ENCODE measurements at regions of chr3 and their contacts with region 1.

Region 1: GRCh38 chr3:149702691-149703441 is 45.0 kb upstream of the WWTR1 start:
- DNase-seq: no peak
- H3K4me3 Mint-ChIP-seq: no peak overlapping the region
- H3K27ac Mint-ChIP-seq: peak overlapping the region; percentile 64
- H3K4me1 Mint-ChIP-seq: peaks cover 33% of the 10 kb centered on the region
- H3K27me3 Mint-ChIP-seq: no peaks in the 10 kb centered on the region

Region 2: GRCh38 chr3:149575961-149576564 is 126.8 kb before region 1 on chr3:
- intact Hi-C with region 1: loop called (anchors 1 kb)
- DNase-seq: no peak
- H3K4me3 Mint-ChIP-seq: no peak overlapping the region
- H3K27ac Mint-ChIP-seq: peak overlapping the region; percentile 42
- H3K4me1 Mint-ChIP-seq: peaks cover 57% of the 10 kb centered on the region
- H3K27me3 Mint-ChIP-seq: no peaks in the 10 kb centered on the region

Region 3: DNA sequence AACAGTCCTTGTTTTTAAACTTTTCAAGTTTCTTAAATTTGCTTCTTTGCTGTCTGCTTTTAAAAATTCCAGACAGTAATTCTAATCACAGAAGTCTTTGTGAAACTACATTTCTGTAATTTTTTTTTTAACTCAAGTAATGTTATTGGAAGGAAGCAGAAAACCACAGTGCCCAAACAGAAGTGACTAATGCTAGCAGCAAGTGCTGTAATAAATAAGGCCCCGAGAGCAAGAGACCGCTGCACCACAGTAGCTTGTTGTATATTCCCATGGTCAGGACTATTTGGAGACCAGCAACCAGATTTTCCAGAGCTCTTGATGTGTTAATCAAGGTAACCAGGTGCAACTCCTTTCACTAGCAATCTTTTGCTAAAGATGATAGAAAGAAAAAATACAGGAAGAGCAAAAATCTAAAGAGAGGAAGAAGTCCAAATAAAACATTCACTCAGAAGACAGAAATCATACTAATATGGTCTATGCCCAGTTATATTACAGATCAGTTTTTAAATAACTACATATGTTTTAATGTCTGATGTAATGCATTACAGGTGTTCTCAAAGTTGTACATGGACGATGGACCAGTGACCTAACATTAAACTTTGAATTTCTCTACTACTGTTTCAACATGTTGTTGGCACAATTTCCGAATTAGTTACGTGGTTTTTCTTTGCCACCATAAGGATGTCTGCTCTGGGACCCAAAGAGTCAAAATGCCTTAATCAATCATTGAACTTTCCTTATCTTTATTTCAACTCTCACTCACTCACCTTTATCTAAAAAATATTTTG is 81.5 kb before region 1 on chr3:
- intact Hi-C with region 1: loop called (anchors 1 kb)
- DNase-seq: no peak
- H3K4me3 Mint-ChIP-seq: no peak overlapping the region
- H3K27ac Mint-ChIP-seq: peak overlapping the region; percentile 2
- H3K4me1 Mint-ChIP-seq: peaks cover 31% of the 10 kb centered on the region
- H3K27me3 Mint-ChIP-seq: peaks cover 10% of the 10 kb centered on the region

Region 4: DNA sequence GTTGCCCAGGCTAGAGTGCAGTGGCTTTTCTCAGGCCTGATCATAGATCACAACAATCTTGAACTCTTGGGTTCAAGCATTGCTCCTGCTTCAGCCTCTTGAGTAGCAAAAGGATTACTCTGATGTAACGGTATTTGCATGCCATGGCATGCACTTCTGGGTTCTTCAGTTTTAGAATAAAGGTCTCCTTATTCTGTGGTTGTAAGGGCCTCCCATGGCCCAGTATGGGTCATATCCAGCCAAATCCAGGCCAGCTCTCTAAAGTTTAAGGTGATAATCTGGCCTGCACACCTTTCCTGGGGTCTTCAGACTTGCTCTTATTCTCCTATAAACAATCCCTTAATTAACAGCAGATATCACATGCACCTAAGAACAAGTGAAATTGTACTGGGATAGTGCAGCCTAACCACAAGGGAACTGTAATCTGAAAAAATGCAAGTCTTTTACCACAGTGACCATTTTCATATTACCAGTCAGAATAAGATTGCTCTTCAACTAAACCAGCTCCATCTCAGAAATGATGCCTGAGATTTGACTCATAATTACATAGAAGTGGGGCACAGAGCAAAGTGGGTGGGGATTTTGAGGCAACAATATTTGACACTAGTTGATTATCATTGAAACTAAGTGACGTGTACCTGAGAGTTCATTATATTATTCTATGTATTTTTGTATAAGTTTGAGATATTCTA is 24.0 kb after region 1 on chr3:
- intact Hi-C with region 1: loop called (anchors 1 kb)
- DNase-seq: no peak
- H3K4me3 Mint-ChIP-seq: no peak overlapping the region
- H3K27ac Mint-ChIP-seq: no peak overlapping the region
- H3K4me1 Mint-ChIP-seq: no peaks in the 10 kb centered on the region
- H3K27me3 Mint-ChIP-seq: peaks cover 7% of the 10 kb centered on the region

Region 5: DNA sequence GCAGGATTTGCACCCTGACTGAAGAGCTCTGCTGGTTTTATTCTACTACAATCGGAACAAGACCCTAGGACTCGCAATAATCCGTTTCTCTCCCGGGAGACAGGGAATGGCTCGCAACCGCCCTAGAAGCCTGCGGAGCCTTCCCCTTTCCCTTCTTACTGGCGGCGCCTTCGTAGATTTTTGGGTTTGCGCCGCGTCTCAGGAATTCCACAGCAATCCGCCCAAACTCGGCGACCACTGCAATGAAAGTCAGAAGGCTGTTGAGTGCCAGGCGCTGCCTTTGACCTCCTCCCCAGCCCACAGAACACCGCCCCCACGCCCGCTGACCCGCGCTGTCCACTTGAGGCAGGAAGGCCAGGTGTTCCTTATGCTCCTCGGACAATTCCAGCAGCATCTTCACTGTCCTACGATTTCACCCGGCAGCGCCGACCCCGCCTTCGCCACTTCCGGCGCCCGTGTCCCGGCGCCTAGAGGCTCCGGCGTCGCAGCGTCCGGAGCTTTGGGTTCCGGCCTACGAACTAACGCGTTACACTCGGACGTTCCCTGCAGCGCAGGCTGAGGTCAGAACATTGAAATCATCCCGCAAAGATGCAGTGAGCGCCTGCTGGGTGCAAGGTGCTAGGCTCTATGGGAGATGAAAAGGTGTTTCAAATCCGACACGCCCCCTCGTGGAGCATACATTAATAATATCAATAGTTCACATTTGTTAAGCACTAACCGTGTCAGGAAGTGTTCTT is 49.4 kb after region 1 on chr3 and contains the start of gene COMMD2:
- intact Hi-C with region 1: loop called (anchors 1 kb)
- DNase-seq: peak; percentile 65
- H3K4me3 Mint-ChIP-seq: peak within 1 kb of the TSS; percentile 95
- H3K27ac Mint-ChIP-seq: peak within 1 kb of the TSS; percentile 59
- H3K4me1 Mint-ChIP-seq: peaks cover 14% of the 10 kb centered on the region
- H3K27me3 Mint-ChIP-seq: peaks cover 4% of the 10 kb centered on the region
- total RNA-seq, gene COMMD2: 44.2 and 44.8 TPM in 2 replicates

Measured in activated T-helper 1 cell treated with anti-CD3 and anti-CD28 coated beads, Interleukin-12 subunit alpha, Interleukin-12 subunit beta, Interleukin-2, Interleukin-4 antibody, amounts not matched to agents 30 ng/mL and 10 ng/mL and 1 ng/mL, durations not matched to agents 14 hours and 24 hours and 36 hours (primary cell).